ENCODE measurements at regions of chr1 and their contacts with region 1.

Region 1: GRCh38 chr1:151611832-151612500 is at the start of gene SNX27:
- DNase-seq: peak; percentile 94
- H3K4me3 Mint-ChIP-seq: peak within 1 kb of the TSS; percentile 93
- H3K27ac Mint-ChIP-seq: peak within 1 kb of the TSS; percentile 72
- H3K4me1 Mint-ChIP-seq: peaks cover 48% of the 10 kb centered on the region
- H3K27me3 Mint-ChIP-seq: peaks cover 3% of the 10 kb centered on the region
- total RNA-seq, gene SNX27: 22.9 to 23.6 TPM

Region 2: GRCh38 chr1:151198255-151199127 is 413.5 kb before region 1 on chr1 and contains the start of gene PIP5K1A:
- CTCF ChIA-PET with region 1: no interaction called
- intact Hi-C with region 1: loop called (anchors 10 kb)
- DNase-seq: peak; percentile 99
- H3K4me3 Mint-ChIP-seq: peak within 1 kb of the TSS; percentile 99
- H3K27ac Mint-ChIP-seq: peak within 1 kb of the TSS; percentile 99
- H3K4me1 Mint-ChIP-seq: peaks cover 39% of the 10 kb centered on the region
- H3K27me3 Mint-ChIP-seq: no peaks in the 10 kb centered on the region
- total RNA-seq, gene PIP5K1A: 72.6 to 82.5 TPM

Region 3: GRCh38 chr1:151346769-151347522 is 265.0 kb before region 1 on chr1 and contains the start of gene RFX5:
- CTCF ChIA-PET with region 1: no interaction called
- intact Hi-C with region 1: loop called (anchors 1 kb)
- DNase-seq: peak; percentile 97
- H3K4me3 Mint-ChIP-seq: peak within 1 kb of the TSS; percentile 93
- H3K27ac Mint-ChIP-seq: peak within 1 kb of the TSS; percentile 96
- H3K4me1 Mint-ChIP-seq: peaks cover 33% of the 10 kb centered on the region
- H3K27me3 Mint-ChIP-seq: no peaks in the 10 kb centered on the region
- total RNA-seq, gene RFX5: 62.3 to 63.4 TPM

Region 4: DNA sequence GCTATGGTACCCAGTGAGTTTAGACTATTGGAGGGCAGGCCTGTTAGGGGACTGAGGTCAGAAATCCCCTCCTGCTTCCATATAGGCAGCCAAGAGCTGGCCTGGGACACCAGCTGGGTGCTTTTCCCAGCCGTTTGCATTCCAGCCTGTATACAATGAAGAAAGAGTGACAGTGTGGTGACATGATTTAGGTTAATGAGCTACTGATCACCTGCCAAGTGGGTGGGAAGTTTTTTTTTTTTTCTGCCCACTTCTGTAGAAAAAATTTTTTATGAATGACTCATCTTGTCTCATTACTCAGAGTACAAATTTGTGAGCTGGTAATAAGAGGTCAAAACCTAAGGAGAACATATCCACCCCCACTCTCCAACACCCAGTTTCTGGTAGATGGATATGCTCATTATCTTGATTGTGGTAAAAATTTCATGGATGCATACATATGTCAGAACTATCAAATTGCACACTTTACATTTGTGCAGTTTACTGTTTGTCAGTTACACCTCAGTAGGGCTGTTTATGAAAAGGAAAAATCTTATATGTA is 117.2 kb before region 1 on chr1:
- CTCF ChIA-PET with region 1: no interaction called
- intact Hi-C with region 1: no loop called
- DNase-seq: peak; percentile 7
- H3K4me3 Mint-ChIP-seq: no peak overlapping the region
- H3K27ac Mint-ChIP-seq: no peak overlapping the region
- H3K4me1 Mint-ChIP-seq: peaks cover 7% of the 10 kb centered on the region
- H3K27me3 Mint-ChIP-seq: no peaks in the 10 kb centered on the region

Region 5: GRCh38 chr1:151762941-151763921 is 151.3 kb after region 1 on chr1 and contains the start of gene MRPL9:
- CTCF ChIA-PET with region 1: no interaction called
- intact Hi-C with region 1: loop called (anchors 2 kb)
- DNase-seq: peak; percentile 91
- H3K4me3 Mint-ChIP-seq: peak within 1 kb of the TSS; percentile 86
- H3K27ac Mint-ChIP-seq: peak within 1 kb of the TSS; percentile 90
- H3K4me1 Mint-ChIP-seq: peaks cover 17% of the 10 kb centered on the region
- H3K27me3 Mint-ChIP-seq: no peaks in the 10 kb centered on the region
- total RNA-seq, gene MRPL9: 157 to 160 TPM

Region 6: GRCh38 chr1:152034646-152035405 is 422.9 kb after region 1 on chr1:
- CTCF ChIA-PET with region 1: no interaction called
- intact Hi-C with region 1: loop called (anchors 5 kb)
- DNase-seq: peak; percentile 85
- H3K4me3 Mint-ChIP-seq: peak overlapping the region; percentile 96
- H3K27ac Mint-ChIP-seq: peak overlapping the region; percentile 98
- H3K4me1 Mint-ChIP-seq: peaks cover 21% of the 10 kb centered on the region
- H3K27me3 Mint-ChIP-seq: no peaks in the 10 kb centered on the region